ENCODE measurements at regions of chr6 and their contacts with region 1.

Region 1: GRCh38 chr6:62681108-62681507 is 395.1 kb upstream of the KHDRBS2 start:
- DNase-seq: no peak
- H3K4me3 ChIP-seq: no peak overlapping the region
- H3K27ac ChIP-seq: no peak overlapping the region
- H3K4me1 ChIP-seq: no peaks in the 10 kb centered on the region
- H3K27me3 ChIP-seq: no peaks in the 10 kb centered on the region
- CTCF ChIP-seq: no peak
- POLR2A ChIP-seq: no peak

Region 2: GRCh38 chr6:62626661-62627060 is 54.4 kb before region 1 on chr6:
- intact Hi-C with region 1: loop called in 1 of 2 experiments (anchors 2 kb)
- DNase-seq: no peak
- H3K4me3 ChIP-seq: no peak overlapping the region
- H3K27ac ChIP-seq: no peak overlapping the region
- H3K4me1 ChIP-seq: no peaks in the 10 kb centered on the region
- H3K27me3 ChIP-seq: no peaks in the 10 kb centered on the region
- CTCF ChIP-seq: no peak
- POLR2A ChIP-seq: no peak